MCF 10A (cell line): ENCODE measurements at regions of chr11 and their contacts with region 1.

Region 1: GRCh38 chr11:63023841-63024648 is 8.4 kb upstream of the SLC22A8 start:
- DNase-seq: peak; percentile 76
- H3K4me3 Mint-ChIP-seq: no peak overlapping the region
- H3K27ac Mint-ChIP-seq: no peak overlapping the region
- H3K4me1 Mint-ChIP-seq: peaks cover 6% of the 10 kb centered on the region
- H3K27me3 Mint-ChIP-seq: peaks cover 25% of the 10 kb centered on the region
- CTCF ChIP-seq: peak; percentile 97

Region 2: DNA sequence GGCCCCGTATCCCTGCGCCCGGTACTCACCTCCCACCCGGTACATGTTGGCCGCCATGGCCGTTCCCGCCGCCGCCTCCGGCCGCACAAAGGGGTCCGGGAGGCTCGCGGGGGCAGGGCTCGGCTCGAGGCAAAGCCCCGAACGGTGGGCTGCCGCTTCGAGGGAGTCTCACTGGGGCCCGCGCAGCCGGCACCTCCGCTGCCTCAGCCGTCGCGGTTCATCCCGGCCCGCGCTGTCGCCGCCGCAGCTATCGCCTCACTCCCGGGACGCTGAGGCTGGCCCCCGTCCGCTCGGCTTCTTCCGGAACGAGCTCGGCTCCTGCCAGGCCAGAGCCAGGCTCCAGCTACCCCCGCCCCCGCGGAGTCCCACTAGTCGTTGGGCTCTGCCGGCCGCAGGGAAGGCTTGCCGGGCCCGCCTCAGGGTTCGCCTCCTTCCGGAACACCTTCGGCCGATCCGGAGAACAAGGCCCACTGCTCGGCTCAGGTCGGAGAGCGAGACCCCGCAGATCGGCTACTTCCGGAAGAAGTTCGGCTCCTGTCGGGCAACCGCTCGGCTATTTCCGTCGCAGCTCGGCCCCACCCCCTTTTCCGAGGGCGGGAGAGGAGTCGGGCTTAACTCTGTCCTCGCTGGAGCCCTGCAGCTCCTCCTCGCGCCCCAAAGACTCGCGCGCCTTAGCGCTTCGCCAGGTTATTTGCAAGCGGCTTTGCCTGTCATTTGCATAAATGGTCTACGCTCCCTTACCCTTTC is 422.5 kb before region 1 on chr11 and contains the start of gene MTA2:
- CTCF ChIA-PET with region 1: no interaction called
- POLR2A ChIA-PET with region 1: no interaction called
- intact Hi-C with region 1: no loop called
- DNase-seq: peak; percentile 98
- H3K4me3 Mint-ChIP-seq: peak within 1 kb of the TSS; percentile 86
- H3K27ac Mint-ChIP-seq: peak within 1 kb of the TSS; percentile 96
- H3K4me1 Mint-ChIP-seq: peaks cover 38% of the 10 kb centered on the region
- H3K27me3 Mint-ChIP-seq: no peaks in the 10 kb centered on the region
- CTCF ChIP-seq: no peak
- total RNA-seq, gene MTA2: 139 and 176 TPM in 2 replicates

Region 3: GRCh38 chr11:62896049-62896448 is 128.0 kb before region 1 on chr11:
- CTCF ChIA-PET with region 1: interaction called, 179 read pairs
- POLR2A ChIA-PET with region 1: no interaction called
- intact Hi-C with region 1: no loop called
- DNase-seq: no peak
- H3K4me3 Mint-ChIP-seq: no peak overlapping the region
- H3K27ac Mint-ChIP-seq: no peak overlapping the region
- H3K4me1 Mint-ChIP-seq: no peaks in the 10 kb centered on the region
- H3K27me3 Mint-ChIP-seq: peaks cover 40% of the 10 kb centered on the region
- CTCF ChIP-seq: no peak

Region 4: DNA sequence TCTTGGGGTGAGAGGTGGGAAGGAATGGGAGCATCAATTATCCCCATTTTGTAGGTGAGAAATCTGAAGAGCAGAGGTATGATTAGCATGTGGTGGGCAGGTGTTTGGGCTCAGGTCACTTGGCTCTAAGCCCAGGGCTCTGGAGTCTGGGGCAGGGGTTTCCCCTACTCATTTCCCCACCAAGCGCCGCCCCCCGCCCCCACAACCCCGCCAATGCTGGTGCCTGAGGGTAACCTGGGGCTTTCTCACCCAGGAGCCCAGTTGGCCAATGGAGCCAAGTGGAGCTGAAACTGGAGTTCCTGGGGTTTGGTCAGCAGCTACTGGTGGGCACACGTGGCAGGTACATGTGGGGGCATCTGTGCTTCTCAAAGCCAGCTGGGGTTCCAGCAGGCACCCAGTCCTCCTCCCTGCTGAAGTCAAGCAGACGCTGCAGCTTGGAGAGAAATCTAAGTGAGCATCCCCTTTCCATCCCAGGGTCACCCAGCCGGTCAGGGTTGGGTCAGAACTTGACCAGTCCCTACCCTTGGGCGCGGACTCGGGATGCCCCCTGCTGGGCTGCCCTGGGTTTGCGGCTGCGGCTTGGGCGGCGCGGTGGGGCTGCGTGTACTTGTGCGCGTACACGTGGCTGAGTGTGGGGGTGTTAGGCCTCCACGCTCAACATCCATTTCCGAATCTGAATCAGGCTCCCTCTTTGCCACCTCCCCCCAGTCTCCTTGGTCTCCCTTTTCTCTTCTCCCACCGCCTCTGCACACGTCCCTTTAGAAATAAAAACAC is 101.2 kb before region 1 on chr11:
- CTCF ChIA-PET with region 1: interaction called, 31 read pairs
- POLR2A ChIA-PET with region 1: no interaction called
- intact Hi-C with region 1: no loop called
- DNase-seq: no peak
- H3K4me3 Mint-ChIP-seq: peak overlapping the region; percentile 74
- H3K27ac Mint-ChIP-seq: no peak overlapping the region
- H3K4me1 Mint-ChIP-seq: peaks cover 17% of the 10 kb centered on the region
- H3K27me3 Mint-ChIP-seq: peaks cover 20% of the 10 kb centered on the region
- CTCF ChIP-seq: peak; percentile 38

Region 5: DNA sequence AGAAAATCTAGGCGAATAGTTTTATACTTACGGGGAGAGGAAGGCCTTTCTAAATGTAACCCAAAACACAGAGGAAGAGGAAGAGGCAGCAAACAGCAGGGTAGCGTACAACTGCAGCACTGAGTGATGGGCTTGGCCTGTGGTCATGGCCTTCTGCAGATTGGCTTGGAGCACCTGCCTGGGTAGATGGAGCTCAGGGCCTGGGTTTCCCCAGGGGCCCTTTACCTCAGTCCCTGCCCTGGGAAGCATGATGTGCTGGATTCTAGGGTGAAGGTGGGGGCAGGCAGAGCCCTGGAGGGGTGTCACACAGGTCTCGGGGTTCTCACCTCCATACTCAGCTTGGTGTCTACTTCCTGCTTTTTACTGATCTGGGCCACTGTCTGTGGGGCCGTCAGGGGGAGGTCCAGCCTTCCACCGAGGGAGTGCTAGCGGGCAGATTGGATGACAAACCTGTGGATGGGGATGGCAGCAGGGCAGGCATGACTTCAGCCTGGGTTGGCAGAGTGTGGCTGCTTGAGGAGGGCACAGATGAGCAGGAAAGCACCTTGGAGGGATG is 75.2 kb before region 1 on chr11:
- CTCF ChIA-PET with region 1: interaction called, 11 read pairs
- POLR2A ChIA-PET with region 1: no interaction called
- intact Hi-C with region 1: no loop called
- DNase-seq: no peak
- H3K4me3 Mint-ChIP-seq: no peak overlapping the region
- H3K27ac Mint-ChIP-seq: no peak overlapping the region
- H3K4me1 Mint-ChIP-seq: no peaks in the 10 kb centered on the region
- H3K27me3 Mint-ChIP-seq: peaks cover 40% of the 10 kb centered on the region
- CTCF ChIP-seq: no peak

Region 6: DNA sequence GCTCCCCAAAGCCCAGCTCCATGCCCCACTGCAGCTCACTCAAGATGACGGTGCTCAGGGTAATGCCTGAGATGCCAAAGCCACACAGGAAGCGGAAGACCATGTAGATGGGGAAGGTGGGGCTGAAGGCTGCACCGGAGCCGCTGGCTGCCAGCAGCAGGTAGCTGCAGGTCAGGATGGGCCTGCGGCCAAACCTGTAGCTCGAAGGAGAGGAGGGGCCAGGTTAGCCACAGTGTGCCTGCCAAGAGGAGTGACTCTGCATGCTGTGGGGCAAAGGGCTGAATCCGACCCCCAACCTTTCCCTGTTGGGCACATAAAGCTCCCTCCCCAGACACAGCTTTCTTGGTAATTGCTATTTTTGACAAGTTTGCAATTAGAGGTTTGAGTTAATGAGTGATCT is 24.4 kb before region 1 on chr11:
- CTCF ChIA-PET with region 1: interaction called, 12 read pairs
- POLR2A ChIA-PET with region 1: interaction called, 3 read pairs
- intact Hi-C with region 1: no loop called
- DNase-seq: peak; percentile 73
- H3K4me3 Mint-ChIP-seq: no peak overlapping the region
- H3K27ac Mint-ChIP-seq: no peak overlapping the region
- H3K4me1 Mint-ChIP-seq: no peaks in the 10 kb centered on the region
- H3K27me3 Mint-ChIP-seq: peaks cover 20% of the 10 kb centered on the region
- CTCF ChIP-seq: no peak

Region 7: GRCh38 chr11:63212742-63213141 is 188.7 kb after region 1 on chr11:
- CTCF ChIA-PET with region 1: interaction called, 5 read pairs
- POLR2A ChIA-PET with region 1: no interaction called
- intact Hi-C with region 1: loop called (anchors 5 kb)
- DNase-seq: peak; percentile 41
- H3K4me3 Mint-ChIP-seq: no peak overlapping the region
- H3K27ac Mint-ChIP-seq: no peak overlapping the region
- H3K4me1 Mint-ChIP-seq: no peaks in the 10 kb centered on the region
- H3K27me3 Mint-ChIP-seq: peaks cover 53% of the 10 kb centered on the region
- CTCF ChIP-seq: peak; percentile 28